Heart right ventricle (tissue), 16 donors: ENCODE measurements at regions of chr10 and their contacts with region 1.

Region 1: GRCh38 chr10:110643653-110644597 is at the start of gene RBM20:
- DNase-seq: peak; percentile 59 to 74
- ATAC-seq: peak; percentile 76 to 92 (median 84)
- H3K4me3 ChIP-seq: peak within 1 kb of the TSS; percentile 41 to 71 (median 68)
- H3K27ac ChIP-seq: peak within 1 kb of the TSS; percentile 77 to 96 (median 90)
- H3K4me1 ChIP-seq: peaks cover 0 to 25% (median 20%) of the 10 kb centered on the region in 9 donors
- H3K27me3 ChIP-seq: peaks cover 0 to 87% (median 66%) of the 10 kb centered on the region in 7 donors
- CTCF ChIP-seq: peak in 1 of 9 donors; percentile 19
- total RNA-seq, gene RBM20: 69.4 to 186 (median 145) TPM

Region 2: DNA sequence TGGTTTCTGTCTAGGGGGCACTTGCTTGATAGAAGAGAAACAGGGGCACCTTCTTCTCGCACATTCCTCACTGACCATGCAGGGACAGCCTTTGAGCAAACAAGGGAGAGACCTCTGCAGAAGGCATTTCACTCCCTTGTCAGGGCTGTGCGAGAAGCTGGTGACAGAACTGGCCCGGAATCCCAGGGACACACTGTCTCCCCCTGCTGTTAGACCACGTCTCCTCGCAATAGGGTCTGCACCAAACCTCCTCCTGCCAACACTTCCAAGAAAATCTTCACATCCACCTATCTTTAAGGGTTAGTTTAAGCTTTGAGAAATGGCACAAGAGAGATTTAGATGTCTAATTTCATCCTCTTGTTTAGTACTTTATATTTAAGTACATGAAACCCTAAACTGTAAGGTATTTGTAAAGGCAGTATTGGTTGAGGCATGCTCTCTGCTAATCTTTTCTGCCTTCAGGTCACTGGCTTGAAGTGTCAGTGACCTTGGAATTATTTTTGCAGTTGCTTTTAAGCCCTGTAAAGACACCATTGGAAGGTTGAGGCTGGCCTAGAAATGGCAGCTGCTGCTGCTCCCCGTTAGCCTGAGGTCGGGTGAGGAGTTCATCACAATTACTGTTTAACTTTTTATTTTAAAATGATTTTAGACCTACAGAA is 37.2 kb after region 1 on chr10:
- intact Hi-C with region 1: loop called in 4 of 10 experiments (anchors 5 kb)
- DNase-seq: peak; percentile 23 to 57
- ATAC-seq: peak; percentile 52 to 69 (median 60)
- H3K4me3 ChIP-seq: no peak overlapping the region
- H3K27ac ChIP-seq: peak overlapping the region; percentile 7 to 89 (median 78)
- H3K4me1 ChIP-seq: peaks cover 0 to 76% (median 35%) of the 10 kb centered on the region in 9 donors
- H3K27me3 ChIP-seq: peaks cover 0 to 4% (median 0%) of the 10 kb centered on the region in 7 donors
- CTCF ChIP-seq: peak; percentile 31 to 68 (median 62)

Region 3: GRCh38 chr10:110774069-110775019 is 130.4 kb after region 1 on chr10:
- intact Hi-C with region 1: loop called in 1 of 10 experiments (anchors 10 kb)
- DNase-seq: no peak
- ATAC-seq: peak in 3 of 8 donors; percentile 10 to 66 (median 27)
- H3K4me3 ChIP-seq: no peak overlapping the region
- H3K27ac ChIP-seq: peak overlapping the region; percentile 3 to 68 (median 56)
- H3K4me1 ChIP-seq: peaks cover 4 to 84% (median 37%) of the 10 kb centered on the region in 9 donors
- H3K27me3 ChIP-seq: no peaks in the 10 kb centered on the region
- CTCF ChIP-seq: no peak